CD8-positive, alpha-beta T cell (primary cell): ENCODE measurements at regions of chr12 and their contacts with region 1.

Region 1: DNA sequence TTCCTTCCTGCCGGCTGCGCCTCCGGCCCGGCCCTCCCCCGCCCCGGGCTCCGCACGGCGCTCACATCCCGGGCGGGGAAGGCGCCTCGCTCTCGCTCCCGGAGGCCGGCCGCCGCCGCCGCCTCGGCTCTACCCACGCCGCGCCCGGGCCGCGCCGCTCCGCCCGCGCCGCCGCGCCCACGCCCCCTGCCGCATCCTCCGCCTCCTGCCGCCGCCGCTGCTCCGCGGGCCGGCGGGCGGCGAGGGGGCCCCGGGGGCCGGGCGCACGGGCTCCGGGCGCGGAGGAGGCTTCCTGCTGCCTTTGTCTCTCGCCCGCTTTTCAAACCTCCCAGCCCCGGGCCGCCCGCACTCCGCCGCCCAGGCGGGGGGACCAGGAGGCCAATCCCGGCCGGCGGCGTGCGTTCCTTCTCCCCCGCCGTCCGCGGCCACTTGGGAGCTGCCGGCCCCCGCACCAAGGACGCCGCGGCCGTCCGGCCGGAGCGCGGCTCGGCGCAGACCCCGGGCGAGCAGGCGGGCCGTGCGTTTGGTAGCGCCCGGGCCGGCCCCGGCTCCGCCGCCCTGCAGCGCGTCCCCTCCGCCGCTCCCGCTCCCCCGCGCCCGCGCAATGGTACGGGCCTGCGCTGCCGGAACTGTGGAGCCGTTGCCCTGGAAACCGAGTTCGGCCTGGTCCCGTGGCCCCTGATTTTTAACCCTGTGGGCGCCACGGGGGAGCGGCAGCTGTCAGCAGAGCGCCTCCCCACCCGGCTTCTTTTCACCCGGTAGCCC is at the start of gene FBXL14:
- DNase-seq: peak; percentile 84 to 96 (median 92)
- ATAC-seq: peak; percentile 59
- H3K4me3 ChIP-seq: peak within 1 kb of the TSS; percentile 68 to 83
- H3K4me3 Mint-ChIP-seq: peak within 1 kb of the TSS; percentile 92
- H3K27ac ChIP-seq: peak within 1 kb of the TSS; percentile 81 to 86
- H3K27ac Mint-ChIP-seq: peak within 1 kb of the TSS; percentile 92
- H3K4me1 ChIP-seq: peaks cover 37% of the 10 kb centered on the region
- H3K4me1 Mint-ChIP-seq: peaks cover 53% of the 10 kb centered on the region
- H3K27me3 ChIP-seq: no peaks in the 10 kb centered on the region
- H3K27me3 Mint-ChIP-seq: no peaks in the 10 kb centered on the region
- CTCF ChIP-seq: no peak
- total RNA-seq, gene FBXL14: 28.1 to 30.5 TPM

Region 2: GRCh38 chr12:459430-460258 is 1134.8 kb before region 1 on chr12 and contains the start of gene B4GALNT3:
- CTCF ChIA-PET with region 1: no interaction called
- POLR2A ChIA-PET with region 1: no interaction called
- intact Hi-C with region 1: loop called in 1 of 2 experiments (anchors 10 kb)
- DNase-seq: peak in 7 of 9 experiments; percentile 14 to 65 (median 48)
- ATAC-seq: peak; percentile 62
- H3K4me3 ChIP-seq: peak within 1 kb of the TSS; percentile 51 to 54
- H3K4me3 Mint-ChIP-seq: peak within 1 kb of the TSS; percentile 89
- H3K27ac ChIP-seq: no peak within 1 kb of the TSS
- H3K27ac Mint-ChIP-seq: peak within 1 kb of the TSS; percentile 25
- H3K4me1 ChIP-seq: peaks cover 10% of the 10 kb centered on the region
- H3K4me1 Mint-ChIP-seq: peaks cover 26% of the 10 kb centered on the region
- H3K27me3 ChIP-seq: peaks cover 0 to 3% of the 10 kb centered on the region in 2 experiments
- H3K27me3 Mint-ChIP-seq: peaks cover 29% of the 10 kb centered on the region
- CTCF ChIP-seq: no peak
- total RNA-seq, gene B4GALNT3: 1.1 to 1.2 TPM

Region 3: GRCh38 chr12:990661-991349 is 603.6 kb before region 1 on chr12 and contains the start of gene ERC1:
- CTCF ChIA-PET with region 1: no interaction called
- POLR2A ChIA-PET with region 1: no interaction called
- intact Hi-C with region 1: loop called in 1 of 2 experiments (anchors 5 kb)
- DNase-seq: peak; percentile 71 to 92 (median 80)
- ATAC-seq: peak; percentile 83
- H3K4me3 ChIP-seq: peak within 1 kb of the TSS; percentile 68 to 98
- H3K4me3 Mint-ChIP-seq: peak within 1 kb of the TSS; percentile 94
- H3K27ac ChIP-seq: peak within 1 kb of the TSS; percentile 78 to 82
- H3K27ac Mint-ChIP-seq: peak within 1 kb of the TSS; percentile 95
- H3K4me1 ChIP-seq: peaks cover 27% of the 10 kb centered on the region
- H3K4me1 Mint-ChIP-seq: peaks cover 50% of the 10 kb centered on the region
- H3K27me3 ChIP-seq: no peaks in the 10 kb centered on the region
- H3K27me3 Mint-ChIP-seq: no peaks in the 10 kb centered on the region
- CTCF ChIP-seq: no peak
- total RNA-seq, gene ERC1: 34.5 to 34.6 TPM

Region 4: DNA sequence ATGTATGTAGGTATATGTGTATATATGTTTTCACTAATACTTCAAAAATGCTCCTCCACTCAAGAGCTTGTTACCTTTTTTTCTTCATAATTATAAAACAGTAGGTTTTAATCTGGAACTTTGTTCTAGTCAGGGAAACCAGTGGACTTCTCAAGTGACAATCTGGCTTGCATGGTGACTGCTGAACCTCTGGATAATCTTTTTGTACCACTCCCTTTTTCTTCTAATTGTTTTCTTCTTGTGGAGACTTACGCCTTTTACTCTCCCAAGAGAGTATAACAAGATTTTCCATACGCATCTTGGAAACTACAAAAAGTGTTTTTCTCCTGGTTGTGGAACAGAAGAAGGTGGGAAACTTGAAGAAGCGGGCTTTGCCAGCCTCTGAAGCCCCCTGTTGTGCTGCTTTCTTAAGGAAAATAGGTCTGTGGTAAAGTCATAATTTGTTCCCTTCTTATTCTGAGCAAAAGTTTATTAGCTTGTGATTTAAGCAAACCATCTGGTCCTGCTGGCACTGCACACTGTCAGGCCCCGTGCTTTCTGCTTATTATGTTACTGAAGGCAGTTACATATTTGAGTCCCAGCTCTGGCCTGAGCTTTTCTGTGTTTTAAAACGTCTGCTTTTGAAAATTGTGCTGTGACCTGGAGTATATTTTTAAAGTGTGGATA is 311.6 kb before region 1 on chr12:
- CTCF ChIA-PET with region 1: no interaction called
- POLR2A ChIA-PET with region 1: no interaction called
- intact Hi-C with region 1: loop called in 1 of 2 experiments (anchors 5 kb)
- DNase-seq: no peak
- ATAC-seq: no peak
- H3K4me3 ChIP-seq: no peak overlapping the region
- H3K4me3 Mint-ChIP-seq: no peak overlapping the region
- H3K27ac ChIP-seq: no peak overlapping the region
- H3K27ac Mint-ChIP-seq: no peak overlapping the region
- H3K4me1 ChIP-seq: peaks cover 9% of the 10 kb centered on the region
- H3K4me1 Mint-ChIP-seq: peaks cover 16% of the 10 kb centered on the region
- H3K27me3 ChIP-seq: no peaks in the 10 kb centered on the region
- H3K27me3 Mint-ChIP-seq: no peaks in the 10 kb centered on the region
- CTCF ChIP-seq: no peak

Region 5: DNA sequence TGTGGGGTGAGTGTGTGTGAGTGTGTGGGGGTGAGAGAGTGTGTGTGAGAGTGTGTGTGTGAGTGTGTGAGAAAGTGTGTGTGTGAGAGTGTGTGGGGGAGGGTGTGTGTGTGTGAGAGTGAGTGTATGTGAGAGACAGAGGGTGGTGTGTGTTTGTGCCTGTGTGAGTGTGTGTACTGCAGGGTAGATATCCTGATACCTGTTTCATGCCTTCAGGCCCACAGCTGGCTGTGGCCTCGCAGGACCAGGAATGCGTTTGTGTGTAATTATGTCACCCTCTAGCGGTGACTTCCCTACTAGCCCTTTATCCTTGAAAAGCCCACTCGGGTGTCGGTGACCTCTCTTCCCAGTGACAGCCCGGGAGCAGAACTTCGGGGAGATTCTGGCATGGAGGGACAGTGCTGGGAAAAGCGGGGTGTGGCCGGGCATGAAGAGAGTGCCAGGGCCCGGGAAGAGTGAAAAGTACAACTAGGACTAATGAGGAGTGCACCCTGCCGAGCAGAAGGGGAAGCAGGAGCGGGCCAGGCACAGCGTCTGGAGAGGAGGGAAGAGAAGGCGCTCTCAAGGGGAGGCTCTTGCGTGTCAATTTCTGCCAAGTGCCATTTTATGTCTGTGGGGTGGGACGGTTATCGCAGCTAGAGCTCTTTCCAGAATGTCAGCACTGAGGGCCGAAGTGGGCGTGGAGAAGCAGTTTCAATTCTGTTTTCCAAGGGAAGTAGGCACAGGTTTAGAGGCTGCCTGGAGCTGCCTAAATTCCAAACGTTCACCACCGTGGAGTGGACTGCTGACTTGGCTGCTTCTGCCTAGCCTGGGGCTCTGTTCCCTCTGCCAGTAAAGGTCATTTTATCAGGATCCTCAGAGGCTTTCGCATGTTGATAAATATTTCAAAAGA is 10.9 kb after region 1 on chr12:
- CTCF ChIA-PET with region 1: interaction called, 20 read pairs
- POLR2A ChIA-PET with region 1: interaction called, 20 read pairs
- intact Hi-C with region 1: loop called in 1 of 2 experiments (anchors 1 kb)
- DNase-seq: peak in 8 of 9 experiments; percentile 32 to 86 (median 64)
- ATAC-seq: peak; percentile 70
- H3K4me3 ChIP-seq: peak overlapping the region; percentile 36 to 37
- H3K4me3 Mint-ChIP-seq: peak overlapping the region; percentile 86
- H3K27ac ChIP-seq: no peak overlapping the region
- H3K27ac Mint-ChIP-seq: peak overlapping the region; percentile 24
- H3K4me1 ChIP-seq: peaks cover 23% of the 10 kb centered on the region
- H3K4me1 Mint-ChIP-seq: peaks cover 31% of the 10 kb centered on the region
- H3K27me3 ChIP-seq: no peaks in the 10 kb centered on the region
- H3K27me3 Mint-ChIP-seq: no peaks in the 10 kb centered on the region
- CTCF ChIP-seq: peak; percentile 64

Region 6: DNA sequence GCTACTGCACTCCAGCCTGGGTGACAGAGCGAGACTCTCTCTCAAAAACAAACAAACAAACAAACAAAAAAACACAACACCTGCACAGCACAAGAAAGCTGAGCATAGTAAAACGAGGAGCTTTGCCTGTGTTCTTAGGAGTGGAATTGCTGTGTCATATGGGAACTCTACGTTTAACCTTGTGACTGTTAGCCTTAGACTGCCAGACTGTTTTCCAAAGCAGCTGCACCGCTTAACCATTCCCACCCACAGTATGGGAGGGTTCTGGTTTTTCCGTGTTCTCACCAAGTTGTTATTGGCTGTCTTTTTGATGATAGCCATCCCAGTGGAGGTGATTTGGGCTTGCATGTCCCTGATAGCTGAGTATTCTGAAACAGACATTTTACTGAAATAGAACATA is 43.8 kb after region 1 on chr12:
- CTCF ChIA-PET with region 1: no interaction called
- POLR2A ChIA-PET with region 1: no interaction called
- intact Hi-C with region 1: no loop called
- DNase-seq: no peak
- ATAC-seq: no peak
- H3K4me3 ChIP-seq: no peak overlapping the region
- H3K4me3 Mint-ChIP-seq: no peak overlapping the region
- H3K27ac ChIP-seq: no peak overlapping the region
- H3K27ac Mint-ChIP-seq: no peak overlapping the region
- H3K4me1 ChIP-seq: no peaks in the 10 kb centered on the region
- H3K4me1 Mint-ChIP-seq: no peaks in the 10 kb centered on the region
- H3K27me3 ChIP-seq: no peaks in the 10 kb centered on the region
- H3K27me3 Mint-ChIP-seq: peaks cover 20% of the 10 kb centered on the region
- CTCF ChIP-seq: no peak

Region 7: GRCh38 chr12:2794736-2795289 is 1200.4 kb after region 1 on chr12 and contains the start of gene FKBP4:
- CTCF ChIA-PET with region 1: no interaction called
- POLR2A ChIA-PET with region 1: no interaction called
- intact Hi-C with region 1: loop called in 1 of 2 experiments (anchors 5 kb)
- DNase-seq: peak; percentile 75 to 95 (median 88)
- ATAC-seq: peak; percentile 92
- H3K4me3 ChIP-seq: peak within 1 kb of the TSS; percentile 69 to 71
- H3K4me3 Mint-ChIP-seq: peak within 1 kb of the TSS; percentile 91
- H3K27ac ChIP-seq: peak within 1 kb of the TSS; percentile 50 to 63
- H3K27ac Mint-ChIP-seq: peak within 1 kb of the TSS; percentile 88
- H3K4me1 ChIP-seq: peaks cover 12% of the 10 kb centered on the region
- H3K4me1 Mint-ChIP-seq: peaks cover 24% of the 10 kb centered on the region
- H3K27me3 ChIP-seq: no peaks in the 10 kb centered on the region
- H3K27me3 Mint-ChIP-seq: no peaks in the 10 kb centered on the region
- CTCF ChIP-seq: no peak
- total RNA-seq, gene FKBP4: 31.1 to 34.5 TPM